MCF 10A (cell line): ENCODE measurements at regions of chr1 and their contacts with region 1.

Region 1: DNA sequence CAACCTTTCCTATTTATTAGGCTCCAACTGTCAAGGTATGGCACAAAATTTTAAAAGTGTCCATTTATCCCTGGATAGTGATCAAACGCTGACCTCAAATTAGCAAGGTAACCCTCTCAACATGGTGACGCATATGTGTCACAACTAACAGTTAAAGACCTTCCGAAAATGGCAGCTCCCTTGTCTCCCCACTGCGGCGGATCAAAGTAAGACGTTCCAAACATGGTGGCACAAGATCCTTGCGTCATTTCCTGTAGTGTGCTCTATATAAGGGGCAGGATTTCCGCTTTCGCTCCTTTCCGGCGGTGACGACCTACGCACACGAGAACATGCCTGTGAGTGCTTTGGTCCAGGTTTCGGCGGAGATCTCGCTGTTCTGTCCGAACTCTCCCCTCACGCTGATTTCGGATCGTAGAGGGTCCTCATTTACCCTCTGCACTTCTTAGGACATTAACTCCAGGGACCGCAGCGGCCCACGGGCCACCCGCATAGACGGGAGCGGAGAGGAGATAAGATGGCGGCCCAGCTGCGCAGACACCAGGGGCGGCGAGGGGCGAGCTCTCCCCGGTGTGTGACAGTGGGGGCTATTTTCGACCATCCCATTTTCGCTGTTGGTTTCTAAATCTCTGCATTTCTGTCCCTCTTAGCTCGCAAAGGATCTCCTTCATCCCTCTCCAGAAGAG is at the start of gene RPS27:
- DNase-seq: peak; percentile 100
- H3K4me3 Mint-ChIP-seq: peak within 1 kb of the TSS; percentile 90
- H3K27ac Mint-ChIP-seq: peak within 1 kb of the TSS; percentile 98
- H3K4me1 Mint-ChIP-seq: peaks cover 33% of the 10 kb centered on the region
- H3K27me3 Mint-ChIP-seq: no peaks in the 10 kb centered on the region
- CTCF ChIP-seq: no peak
- total RNA-seq, gene RPS27: 3,026 and 3,064 TPM in 2 replicates

Region 2: DNA sequence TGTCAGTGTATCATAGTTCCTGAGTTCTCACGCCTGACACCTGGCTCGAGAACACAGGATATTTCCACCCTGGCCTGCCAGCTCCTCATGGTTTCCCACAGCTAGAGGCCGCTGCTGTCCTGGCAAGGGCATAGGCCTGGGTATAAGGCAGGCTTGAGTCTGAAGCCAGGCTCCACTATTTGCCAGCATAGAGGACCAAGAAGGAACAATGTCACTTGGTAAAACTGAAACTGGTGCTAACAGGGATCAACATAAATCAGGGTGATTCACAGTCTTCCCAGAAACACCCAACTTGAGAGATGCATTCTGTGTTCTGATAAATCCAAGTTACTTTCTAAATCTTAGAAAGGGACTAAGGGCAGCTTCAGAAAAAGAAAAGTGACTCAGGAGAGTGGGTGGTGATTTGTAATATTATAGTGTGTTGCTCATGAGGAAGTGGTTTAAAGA is 418.0 kb before region 1 on chr1:
- CTCF ChIA-PET with region 1: interaction called, 5 read pairs
- POLR2A ChIA-PET with region 1: interaction called, 8 read pairs
- intact Hi-C with region 1: loop called (anchors 1 kb)
- DNase-seq: peak; percentile 94
- H3K4me3 Mint-ChIP-seq: no peak overlapping the region
- H3K27ac Mint-ChIP-seq: peak overlapping the region; percentile 67
- H3K4me1 Mint-ChIP-seq: peaks cover 33% of the 10 kb centered on the region
- H3K27me3 Mint-ChIP-seq: no peaks in the 10 kb centered on the region
- CTCF ChIP-seq: peak; percentile 98

Region 3: DNA sequence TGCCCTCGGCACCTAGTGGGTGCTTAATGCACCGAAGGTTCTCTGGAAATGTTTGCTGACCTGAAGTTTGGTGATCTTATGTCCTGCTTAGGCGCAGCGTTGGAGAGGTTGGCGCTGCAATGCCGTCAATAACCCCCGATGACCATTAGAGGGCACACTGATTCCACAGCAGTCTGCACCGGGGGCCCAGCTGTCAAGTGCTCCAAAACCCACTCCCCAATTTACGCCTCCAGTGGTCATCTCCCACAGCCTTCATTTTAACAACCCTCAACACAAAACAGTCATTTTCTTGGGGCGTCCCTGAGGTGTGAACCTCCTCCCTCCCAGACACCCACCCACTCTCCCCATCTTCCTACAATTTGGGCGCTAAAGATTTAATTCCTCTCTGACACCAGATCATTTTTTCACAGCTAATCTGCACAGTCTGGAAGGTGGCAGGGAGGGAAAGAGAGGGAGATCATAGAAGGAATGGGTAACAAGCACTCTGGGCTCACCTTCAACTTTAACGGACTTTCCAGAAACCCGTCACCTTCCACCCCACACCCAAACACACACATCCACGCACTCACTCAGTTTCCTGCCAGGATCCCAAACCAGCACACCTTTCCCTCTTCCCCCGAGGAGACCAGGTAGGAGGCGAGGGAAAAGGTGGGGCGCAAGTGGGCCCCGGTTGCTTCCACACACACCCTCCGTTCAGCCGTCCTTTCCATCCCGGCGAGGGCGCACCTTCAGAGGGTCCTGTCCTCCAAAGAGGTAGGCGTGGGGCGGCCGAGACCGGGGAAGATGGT is 312.7 kb before region 1 on chr1:
- CTCF ChIA-PET with region 1: interaction called, 24 read pairs
- POLR2A ChIA-PET with region 1: interaction called, 15 read pairs
- intact Hi-C with region 1: loop called (anchors 1 kb)
- DNase-seq: peak; percentile 66
- H3K4me3 Mint-ChIP-seq: peak overlapping the region; percentile 73
- H3K27ac Mint-ChIP-seq: no peak overlapping the region
- H3K4me1 Mint-ChIP-seq: peaks cover 7% of the 10 kb centered on the region
- H3K27me3 Mint-ChIP-seq: peaks cover 41% of the 10 kb centered on the region
- CTCF ChIP-seq: peak; percentile 98

Region 4: GRCh38 chr1:153783233-153784190 is 207.1 kb before region 1 on chr1:
- CTCF ChIA-PET with region 1: interaction called, 7 read pairs
- POLR2A ChIA-PET with region 1: interaction called, 23 read pairs
- intact Hi-C with region 1: no loop called
- DNase-seq: peak; percentile 92
- H3K4me3 Mint-ChIP-seq: peak overlapping the region; percentile 94
- H3K27ac Mint-ChIP-seq: peak overlapping the region; percentile 84
- H3K4me1 Mint-ChIP-seq: peaks cover 4% of the 10 kb centered on the region
- H3K27me3 Mint-ChIP-seq: peaks cover 13% of the 10 kb centered on the region
- CTCF ChIP-seq: no peak

Region 5: GRCh38 chr1:153816283-153816889 is 174.2 kb before region 1 on chr1:
- CTCF ChIA-PET with region 1: interaction called, 14 read pairs
- POLR2A ChIA-PET with region 1: interaction called, 12 read pairs
- intact Hi-C with region 1: loop called (anchors 1 kb)
- DNase-seq: no peak
- H3K4me3 Mint-ChIP-seq: no peak overlapping the region
- H3K27ac Mint-ChIP-seq: peak overlapping the region; percentile 2
- H3K4me1 Mint-ChIP-seq: no peaks in the 10 kb centered on the region
- H3K27me3 Mint-ChIP-seq: no peaks in the 10 kb centered on the region
- CTCF ChIP-seq: no peak

Region 6: DNA sequence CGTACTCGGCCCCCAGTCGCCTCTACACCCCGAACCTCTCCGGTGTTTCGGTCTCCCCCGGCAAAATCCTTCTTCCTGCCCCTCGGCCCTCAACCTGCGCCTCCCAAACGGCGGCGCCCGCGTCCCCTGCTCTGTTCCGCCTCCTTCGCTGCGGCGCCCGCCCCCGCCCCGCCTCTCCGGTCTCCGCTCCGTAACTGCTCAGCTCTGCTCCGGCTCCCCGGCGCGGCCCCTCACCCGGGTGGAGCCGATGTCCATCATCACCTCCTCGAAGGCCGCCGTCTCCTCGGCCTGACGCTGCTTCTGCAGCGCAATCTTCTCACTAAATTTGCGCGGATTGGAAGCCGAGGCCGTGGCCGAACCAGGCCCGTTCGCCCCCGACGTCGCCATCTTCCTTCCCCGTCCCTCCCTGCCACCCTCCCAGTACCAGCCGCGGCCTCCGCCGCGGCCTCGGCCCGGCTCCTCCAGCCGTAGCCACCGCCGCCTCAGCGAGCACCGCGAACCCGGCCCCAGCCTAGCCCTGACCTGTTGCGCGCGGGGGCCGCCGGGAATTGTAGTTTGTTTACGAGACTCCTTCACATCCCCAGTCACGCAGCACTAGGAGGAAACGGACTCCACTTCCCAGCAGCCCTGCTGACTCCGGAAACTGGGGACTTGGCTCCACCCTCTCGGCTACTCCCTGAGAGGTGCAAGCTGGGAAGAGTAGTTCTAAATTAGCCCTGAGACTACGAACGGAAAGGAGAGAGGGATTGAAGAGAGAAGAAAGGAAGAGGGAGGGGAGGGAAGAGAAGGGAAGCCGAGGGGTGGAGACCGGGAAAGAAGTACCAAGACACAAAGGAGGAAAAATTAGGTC is 32.3 kb before region 1 on chr1 and contains the start of gene CRTC2:
- CTCF ChIA-PET with region 1: interaction called, 40 read pairs
- POLR2A ChIA-PET with region 1: interaction called, 358 read pairs
- intact Hi-C with region 1: loop called (anchors 2 kb)
- DNase-seq: peak; percentile 100
- H3K4me3 Mint-ChIP-seq: peak within 1 kb of the TSS; percentile 96
- H3K27ac Mint-ChIP-seq: peak within 1 kb of the TSS; percentile 92
- H3K4me1 Mint-ChIP-seq: peaks cover 55% of the 10 kb centered on the region
- H3K27me3 Mint-ChIP-seq: no peaks in the 10 kb centered on the region
- CTCF ChIP-seq: no peak
- total RNA-seq, gene CRTC2: 47.0 and 55.1 TPM in 2 replicates

Region 7: GRCh38 chr1:154220071-154220969 is 229.7 kb after region 1 on chr1 and contains the start of gene UBAP2L:
- CTCF ChIA-PET with region 1: no interaction called
- POLR2A ChIA-PET with region 1: interaction called, 27 read pairs
- intact Hi-C with region 1: no loop called
- DNase-seq: peak; percentile 100
- H3K4me3 Mint-ChIP-seq: peak within 1 kb of the TSS; percentile 92
- H3K27ac Mint-ChIP-seq: peak within 1 kb of the TSS; percentile 99
- H3K4me1 Mint-ChIP-seq: peaks cover 49% of the 10 kb centered on the region
- H3K27me3 Mint-ChIP-seq: no peaks in the 10 kb centered on the region
- CTCF ChIP-seq: no peak
- total RNA-seq, gene UBAP2L: 219 and 223 TPM in 2 replicates